ENCODE measurements at regions of chr11 and their contacts with region 1.

Region 1: DNA sequence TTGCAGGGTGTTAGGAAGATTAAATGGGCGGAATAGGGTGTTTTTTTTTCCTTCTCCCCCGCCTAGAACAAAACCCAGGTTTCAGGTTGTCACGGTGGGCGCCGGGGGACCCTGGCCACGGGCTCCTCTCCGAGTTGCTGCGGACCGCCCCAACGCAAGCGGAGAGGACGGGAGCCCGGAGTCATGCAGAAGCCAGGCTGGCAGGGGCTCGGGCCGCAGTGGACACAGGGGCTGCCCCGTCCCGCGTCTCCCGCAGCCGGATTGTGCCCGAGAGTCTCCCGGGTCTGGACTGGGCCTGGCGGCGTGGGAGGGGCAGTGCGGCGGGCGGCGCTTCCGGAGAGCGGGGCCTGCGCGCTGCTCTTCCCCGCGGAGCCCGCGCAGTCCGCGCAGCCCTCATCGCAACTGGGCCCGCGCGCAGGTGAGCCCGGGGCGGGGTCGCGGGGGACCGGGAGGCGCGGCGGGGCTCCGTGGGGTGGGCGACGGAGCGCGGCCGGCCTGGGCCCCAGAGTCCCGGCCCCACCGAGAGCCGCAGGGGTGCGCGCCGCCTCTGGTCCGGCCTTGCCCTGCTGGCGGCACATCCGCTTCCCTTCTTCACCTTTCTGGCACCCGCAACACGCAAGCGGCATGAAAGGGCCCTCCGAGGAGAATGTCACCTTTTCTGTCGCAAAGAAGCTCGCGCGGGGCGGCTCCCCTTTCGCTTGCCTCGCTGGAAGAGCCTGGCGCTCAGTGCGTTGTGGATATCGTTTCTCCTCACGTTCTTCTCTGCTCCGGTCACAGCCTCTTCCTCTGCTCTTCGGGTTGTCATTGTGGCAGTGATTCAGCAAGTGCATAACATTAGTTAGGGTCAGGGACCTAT is at the start of gene TIRAP:
- DNase-seq: peak in 1 of 2 experiments; percentile 79
- H3K4me3 ChIP-seq: peak within 1 kb of the TSS; percentile 46 to 91 (median 83)
- H3K27ac ChIP-seq: no peak within 1 kb of the TSS
- H3K4me1 ChIP-seq: peaks cover 0 to 6% (median 4%) of the 10 kb centered on the region in 4 experiments; a peak in 4 of 7 replicates
- H3K27me3 ChIP-seq: peaks cover 0 to 5% (median 2%) of the 10 kb centered on the region in 4 experiments; a peak in 4 of 7 replicates
- CTCF ChIP-seq: peak in 1 of 3 experiments; percentile 16; a peak in 1 of 4 replicates
- EP300 ChIP-seq: no peak
- POLR2A ChIP-seq: peak in 1 of 2 experiments; percentile 66; a peak in 2 of 3 replicates
- RAD21 ChIP-seq: no peak
- total RNA-seq, gene TIRAP: 4.5 and 5.3 TPM in 2 replicates

Region 2: GRCh38 chr11:126262216-126262615 is 20.7 kb before region 1 on chr11:
- CTCF ChIA-PET with region 1: no interaction called
- POLR2A ChIA-PET with region 1: interaction called, 75 read pairs
- DNase-seq: no peak
- H3K4me3 ChIP-seq: no peak overlapping the region
- H3K27ac ChIP-seq: no peak overlapping the region
- H3K4me1 ChIP-seq: no peaks in the 10 kb centered on the region
- H3K27me3 ChIP-seq: no peaks in the 10 kb centered on the region
- CTCF ChIP-seq: no peak
- EP300 ChIP-seq: no peak
- POLR2A ChIP-seq: peak in 1 of 2 experiments; percentile 23; a peak in 1 of 3 replicates
- RAD21 ChIP-seq: no peak

Region 3: GRCh38 chr11:126293726-126294125 is 10.8 kb after region 1 on chr11:
- CTCF ChIA-PET with region 1: interaction called, 4 read pairs
- POLR2A ChIA-PET with region 1: interaction called, 24 read pairs
- DNase-seq: no peak
- H3K4me3 ChIP-seq: no peak overlapping the region
- H3K27ac ChIP-seq: no peak overlapping the region
- H3K4me1 ChIP-seq: no peaks in the 10 kb centered on the region
- H3K27me3 ChIP-seq: no peaks in the 10 kb centered on the region
- CTCF ChIP-seq: no peak
- EP300 ChIP-seq: no peak
- POLR2A ChIP-seq: no peak
- RAD21 ChIP-seq: no peak

Region 4: GRCh38 chr11:126303623-126304456 is 20.9 kb after region 1 on chr11 and contains the start of gene DCPS:
- CTCF ChIA-PET with region 1: interaction called, 5 read pairs
- POLR2A ChIA-PET with region 1: interaction called, 23 read pairs
- DNase-seq: peak; percentile 50 to 97
- H3K4me3 ChIP-seq: peak within 1 kb of the TSS; percentile 63 to 98 (median 86)
- H3K27ac ChIP-seq: peak within 1 kb of the TSS; percentile 97
- H3K4me1 ChIP-seq: peaks cover 0 to 5% (median 2%) of the 10 kb centered on the region in 4 experiments; a peak in 4 of 7 replicates
- H3K27me3 ChIP-seq: no peaks in the 10 kb centered on the region
- CTCF ChIP-seq: no peak
- EP300 ChIP-seq: peak in 1 of 2 experiments; percentile 62; a peak in 1 of 3 replicates
- POLR2A ChIP-seq: peak; percentile 93 to 99
- RAD21 ChIP-seq: no peak
- total RNA-seq, gene DCPS: 24.6 and 24.8 TPM in 2 replicates

Region 5: GRCh38 chr11:126391970-126392639 is 109.1 kb after region 1 on chr11:
- CTCF ChIA-PET with region 1: no interaction called
- POLR2A ChIA-PET with region 1: no interaction called
- DNase-seq: no peak
- H3K4me3 ChIP-seq: no peak overlapping the region
- H3K27ac ChIP-seq: no peak overlapping the region
- H3K4me1 ChIP-seq: peaks cover 0 to 3% (median 0%) of the 10 kb centered on the region in 4 experiments; a peak in 3 of 7 replicates
- H3K27me3 ChIP-seq: no peaks in the 10 kb centered on the region
- CTCF ChIP-seq: peak; percentile 60 to 67 (median 64)
- EP300 ChIP-seq: no peak
- POLR2A ChIP-seq: no peak
- RAD21 ChIP-seq: peak; percentile 63 to 69

Measured in H1 (cell line).